ENCODE measurements at regions of chr2 and their contacts with region 1.

Region 1: GRCh38 chr2:215002500-215002899 is 135.9 kb downstream of the ABCA12 start:
- DNase-seq: no peak
- H3K4me3 ChIP-seq: no peak overlapping the region
- H3K27ac ChIP-seq: no peak overlapping the region
- H3K4me1 ChIP-seq: no peaks in the 10 kb centered on the region
- H3K27me3 ChIP-seq: no peaks in the 10 kb centered on the region
- CTCF ChIP-seq: peak in 1 of 4 experiments; percentile 44
- EP300 ChIP-seq: no peak
- POLR2A ChIP-seq: no peak

Region 2: DNA sequence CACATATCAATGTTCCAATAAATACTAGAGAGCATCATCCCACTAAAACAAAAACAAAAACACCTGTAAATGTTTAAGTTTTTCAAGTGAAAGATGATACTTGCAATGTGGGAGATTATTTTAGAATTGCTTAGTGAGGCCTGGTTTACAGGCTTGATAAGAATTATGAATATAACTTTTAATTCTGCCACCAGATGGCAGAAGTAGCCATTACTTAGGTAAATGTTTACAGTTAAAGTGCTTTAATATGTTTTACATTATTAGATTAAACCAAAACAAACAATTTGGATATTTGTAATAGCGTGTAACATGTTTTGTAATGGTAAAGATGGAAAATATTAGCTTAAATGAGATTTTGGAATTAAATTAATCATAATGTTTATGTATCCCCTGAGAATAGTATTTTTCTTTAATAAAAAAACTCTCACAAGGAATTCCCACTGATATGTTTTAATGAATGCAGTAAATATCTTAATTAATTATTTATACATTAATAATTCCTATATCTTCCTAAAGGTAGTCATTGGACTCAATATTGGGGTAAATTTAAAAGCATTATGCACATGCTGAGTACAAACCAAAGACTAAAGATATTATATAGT is 1196.3 kb before region 1 on chr2:
- intact Hi-C with region 1: loop called (anchors 5 kb)
- DNase-seq: no peak
- H3K4me3 ChIP-seq: no peak overlapping the region
- H3K27ac ChIP-seq: no peak overlapping the region
- H3K4me1 ChIP-seq: no peaks in the 10 kb centered on the region
- H3K27me3 ChIP-seq: no peaks in the 10 kb centered on the region
- CTCF ChIP-seq: peak in 2 of 4 experiments; percentile 17 to 33
- EP300 ChIP-seq: no peak
- POLR2A ChIP-seq: no peak

Region 3: GRCh38 chr2:214328941-214329340 is 673.6 kb before region 1 on chr2:
- intact Hi-C with region 1: no loop called
- DNase-seq: no peak
- H3K4me3 ChIP-seq: no peak overlapping the region
- H3K27ac ChIP-seq: no peak overlapping the region
- H3K4me1 ChIP-seq: no peaks in the 10 kb centered on the region
- H3K27me3 ChIP-seq: no peaks in the 10 kb centered on the region
- CTCF ChIP-seq: no peak
- EP300 ChIP-seq: no peak
- POLR2A ChIP-seq: no peak